HEK293T (cell line): ENCODE measurements at regions of chr14 and their contacts with region 1.

Region 1: GRCh38 chr14:23665375-23666192 is 29.4 kb downstream of the DHRS2 start:
- DNase-seq: peak; percentile 27

Region 2: GRCh38 chr14:23613242-23614070 is 52.1 kb before region 1 on chr14:
- CTCF ChIA-PET with region 1: no interaction called
- POLR2A ChIA-PET with region 1: no interaction called
- DNase-seq: no peak

Region 3: DNA sequence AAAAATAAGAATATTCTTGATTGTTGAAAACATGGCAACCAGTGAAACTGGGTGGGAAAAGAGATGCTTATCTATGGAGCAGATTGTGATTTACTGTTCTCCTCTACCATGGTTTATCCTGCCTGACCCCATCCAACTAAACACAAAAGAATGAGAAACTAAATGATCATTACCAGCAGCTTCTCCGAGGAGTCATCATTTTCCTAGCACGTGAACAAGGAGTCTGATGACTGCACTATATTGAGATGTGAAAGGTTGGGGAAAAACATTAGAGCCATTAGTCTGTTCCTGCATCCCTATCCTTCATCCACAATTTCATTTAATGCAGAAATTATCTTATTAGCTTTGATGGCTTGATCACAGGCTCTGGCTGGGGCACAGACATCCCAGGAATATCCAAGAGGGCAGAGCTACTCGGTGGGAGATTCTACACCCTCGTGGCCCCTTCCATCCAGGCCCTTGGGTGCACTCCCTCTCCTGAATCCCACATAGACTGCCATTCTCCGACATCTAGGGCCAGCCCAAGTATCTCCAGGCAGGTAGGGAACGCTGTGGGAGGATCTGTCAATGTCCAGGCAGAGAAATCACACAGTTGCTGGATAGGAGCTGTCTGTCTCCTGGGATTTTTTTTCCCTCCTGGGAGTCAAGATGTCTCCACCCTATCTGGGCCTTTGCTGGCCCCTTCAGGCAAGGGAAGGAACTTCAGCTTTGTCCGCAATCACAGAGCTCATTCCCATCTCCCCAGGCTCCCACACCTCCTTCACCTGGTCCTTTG is 244.7 kb after region 1 on chr14:
- CTCF ChIA-PET with region 1: interaction called, 14 read pairs
- POLR2A ChIA-PET with region 1: no interaction called
- DNase-seq: peak; percentile 80